ENCODE measurements at regions of chr5 and their contacts with region 1.

Region 1: DNA sequence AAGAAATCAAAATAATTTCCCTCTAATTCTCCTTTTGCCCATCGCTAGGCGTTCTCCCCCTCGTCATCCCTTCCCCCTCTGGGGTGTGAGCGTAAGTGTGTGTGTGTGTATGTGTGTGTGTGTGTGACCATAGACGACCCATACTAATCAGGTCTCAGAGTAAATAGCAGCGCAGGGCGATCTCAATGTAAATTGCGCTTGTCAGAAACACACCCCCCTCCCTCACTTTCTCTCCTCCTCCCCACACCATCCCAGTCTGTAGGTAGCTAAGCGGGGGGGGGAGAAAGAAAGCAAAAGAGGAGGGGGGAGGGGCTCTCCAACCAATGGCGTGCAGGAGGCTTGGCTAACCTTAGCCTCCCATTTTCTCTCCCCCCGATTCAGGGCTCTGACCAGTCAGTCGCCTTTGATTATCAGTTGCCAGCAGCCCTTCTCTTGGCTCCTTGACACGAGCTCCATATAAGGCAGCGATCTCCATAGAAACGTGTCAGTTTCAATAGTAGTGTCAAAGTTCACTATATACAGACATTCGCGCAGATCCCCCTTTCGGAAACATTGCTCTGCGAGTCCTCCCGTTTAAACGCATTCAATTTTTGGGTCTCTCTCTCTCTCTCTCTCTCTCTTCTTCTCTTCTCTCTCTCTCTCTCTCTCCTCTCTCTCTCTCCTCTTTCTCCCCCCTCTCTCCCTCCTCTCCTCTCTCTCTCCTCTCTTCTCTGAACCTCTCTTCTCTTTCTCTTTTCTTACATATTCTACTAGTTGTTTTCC is at the start of gene NR2F1:
- DNase-seq: peak; percentile 99
- ATAC-seq: peak; percentile 77
- H3K4me3 ChIP-seq: peak within 1 kb of the TSS; percentile 90 to 96 (median 95)
- H3K27ac ChIP-seq: peak within 1 kb of the TSS; percentile 92
- H3K4me1 ChIP-seq: peaks cover 26% of the 10 kb centered on the region
- H3K27me3 ChIP-seq: peaks cover 3 to 22% of the 10 kb centered on the region in 2 experiments; a peak in 3 of 5 replicates
- CTCF ChIP-seq: no peak
- EP300 ChIP-seq: peak; percentile 36 to 47; a peak in 1 of 4 replicates
- POLR2A ChIP-seq: peak in 1 of 2 experiments; percentile 96; a peak in 2 of 4 replicates
- RAD21 ChIP-seq: no peak
- total RNA-seq, gene NR2F1: 14.0 and 17.1 TPM in 2 replicates

Region 2: GRCh38 chr5:92885950-92886349 is 696.9 kb before region 1 on chr5:
- CTCF ChIA-PET with region 1: no interaction called
- POLR2A ChIA-PET with region 1: interaction called, 7 read pairs
- in situ Hi-C with region 1: loop called (anchors 5 kb)
- intact Hi-C with region 1: loop called (anchors 2 kb)
- DNase-seq: peak; percentile 53
- ATAC-seq: peak; percentile 90
- H3K4me3 ChIP-seq: no peak overlapping the region
- H3K27ac ChIP-seq: no peak overlapping the region
- H3K4me1 ChIP-seq: peaks cover 48% of the 10 kb centered on the region
- H3K27me3 ChIP-seq: no peaks in the 10 kb centered on the region
- CTCF ChIP-seq: peak; percentile 88
- EP300 ChIP-seq: no peak
- POLR2A ChIP-seq: no peak
- RAD21 ChIP-seq: peak; percentile 85

Region 3: DNA sequence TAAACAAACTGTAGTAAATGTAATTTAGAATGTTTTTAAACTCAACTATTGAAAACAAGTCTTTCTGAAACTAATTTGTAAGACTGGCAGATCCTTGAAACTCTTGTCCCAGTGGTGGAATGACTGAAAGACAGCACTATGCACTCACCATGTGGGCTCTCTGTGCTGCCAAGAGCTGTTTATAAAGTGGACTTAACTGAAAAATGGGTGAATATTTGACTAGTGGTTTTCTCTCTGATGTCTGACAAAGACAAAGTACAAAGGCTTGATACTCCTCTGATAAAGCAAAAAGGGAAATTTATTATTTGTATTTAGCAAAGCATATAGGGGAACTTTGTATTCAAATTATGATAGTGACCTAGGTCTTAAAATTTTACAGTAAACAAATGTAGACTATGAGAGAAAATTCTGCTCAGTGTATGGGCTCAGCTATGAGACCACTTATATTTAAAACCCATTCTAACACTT is 637.2 kb before region 1 on chr5:
- CTCF ChIA-PET with region 1: no interaction called
- POLR2A ChIA-PET with region 1: interaction called, 13 read pairs
- in situ Hi-C with region 1: no loop called
- intact Hi-C with region 1: no loop called
- DNase-seq: peak; percentile 95
- ATAC-seq: peak; percentile 97
- H3K4me3 ChIP-seq: 0 out of 6 replicates have a peak overlapping the region, but pooled peaks of 1 of the 3 experiments have one; percentile 1
- H3K27ac ChIP-seq: peak overlapping the region; percentile 91
- H3K4me1 ChIP-seq: peaks cover 70% of the 10 kb centered on the region
- H3K27me3 ChIP-seq: no peaks in the 10 kb centered on the region
- CTCF ChIP-seq: no peak
- EP300 ChIP-seq: peak in 1 of 2 experiments; percentile 92; a peak in 2 of 4 replicates
- POLR2A ChIP-seq: peak in 1 of 2 experiments; percentile 61; a peak in 3 of 4 replicates
- RAD21 ChIP-seq: no peak

Region 4: DNA sequence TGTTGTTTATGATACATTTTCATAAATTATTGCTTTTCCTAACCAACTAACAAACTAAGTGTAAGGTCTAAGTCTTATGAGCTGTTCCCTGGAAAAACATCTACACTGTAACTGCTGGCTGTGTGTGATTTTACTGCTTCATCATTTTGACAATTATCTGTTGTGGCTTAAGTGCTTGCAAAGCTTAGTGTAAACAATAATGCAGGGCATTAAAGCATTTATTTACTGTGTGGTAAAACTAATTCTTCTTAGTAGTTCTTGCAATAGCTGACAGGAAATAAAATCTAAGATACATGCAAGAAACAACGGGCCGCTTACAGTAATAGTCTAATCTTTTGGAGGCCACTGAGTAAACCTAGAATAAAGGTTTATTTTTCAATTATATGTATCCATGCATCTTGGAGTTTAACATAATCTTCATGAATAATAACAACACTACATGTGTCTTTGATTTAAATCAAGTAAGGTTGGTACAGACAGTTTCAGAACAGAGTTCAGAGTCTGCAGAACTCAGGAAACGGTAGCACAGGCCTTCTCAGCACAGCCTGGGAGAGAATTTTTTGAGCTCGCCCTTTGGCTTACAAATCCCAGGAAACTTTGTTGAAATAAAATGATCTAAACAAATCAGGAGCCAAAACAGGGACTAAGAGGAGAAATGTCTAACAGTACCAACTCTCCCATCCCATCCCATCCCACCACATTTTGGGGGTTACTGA is 474.9 kb before region 1 on chr5:
- CTCF ChIA-PET with region 1: no interaction called
- POLR2A ChIA-PET with region 1: no interaction called
- in situ Hi-C with region 1: no loop called
- intact Hi-C with region 1: no loop called
- DNase-seq: no peak
- ATAC-seq: peak; percentile 46; the same call in 1 of the 3 replicates
- H3K4me3 ChIP-seq: no peak overlapping the region
- H3K27ac ChIP-seq: no peak overlapping the region
- H3K4me1 ChIP-seq: peaks cover 12% of the 10 kb centered on the region; the same call in 1 of the 2 replicates
- H3K27me3 ChIP-seq: no peaks in the 10 kb centered on the region; a peak in 1 of 5 replicates
- CTCF ChIP-seq: no peak
- EP300 ChIP-seq: no peak
- POLR2A ChIP-seq: no peak
- RAD21 ChIP-seq: no peak

Region 5: GRCh38 chr5:93566091-93566490 is 16.8 kb before region 1 on chr5:
- CTCF ChIA-PET with region 1: no interaction called
- POLR2A ChIA-PET with region 1: no interaction called
- in situ Hi-C with region 1: no loop called
- intact Hi-C with region 1: no loop called
- DNase-seq: no peak
- ATAC-seq: no peak
- H3K4me3 ChIP-seq: no peak overlapping the region
- H3K27ac ChIP-seq: no peak overlapping the region
- H3K4me1 ChIP-seq: no peaks in the 10 kb centered on the region
- H3K27me3 ChIP-seq: no peaks in the 10 kb centered on the region
- CTCF ChIP-seq: no peak
- EP300 ChIP-seq: no peak
- POLR2A ChIP-seq: no peak
- RAD21 ChIP-seq: no peak

Region 6: DNA sequence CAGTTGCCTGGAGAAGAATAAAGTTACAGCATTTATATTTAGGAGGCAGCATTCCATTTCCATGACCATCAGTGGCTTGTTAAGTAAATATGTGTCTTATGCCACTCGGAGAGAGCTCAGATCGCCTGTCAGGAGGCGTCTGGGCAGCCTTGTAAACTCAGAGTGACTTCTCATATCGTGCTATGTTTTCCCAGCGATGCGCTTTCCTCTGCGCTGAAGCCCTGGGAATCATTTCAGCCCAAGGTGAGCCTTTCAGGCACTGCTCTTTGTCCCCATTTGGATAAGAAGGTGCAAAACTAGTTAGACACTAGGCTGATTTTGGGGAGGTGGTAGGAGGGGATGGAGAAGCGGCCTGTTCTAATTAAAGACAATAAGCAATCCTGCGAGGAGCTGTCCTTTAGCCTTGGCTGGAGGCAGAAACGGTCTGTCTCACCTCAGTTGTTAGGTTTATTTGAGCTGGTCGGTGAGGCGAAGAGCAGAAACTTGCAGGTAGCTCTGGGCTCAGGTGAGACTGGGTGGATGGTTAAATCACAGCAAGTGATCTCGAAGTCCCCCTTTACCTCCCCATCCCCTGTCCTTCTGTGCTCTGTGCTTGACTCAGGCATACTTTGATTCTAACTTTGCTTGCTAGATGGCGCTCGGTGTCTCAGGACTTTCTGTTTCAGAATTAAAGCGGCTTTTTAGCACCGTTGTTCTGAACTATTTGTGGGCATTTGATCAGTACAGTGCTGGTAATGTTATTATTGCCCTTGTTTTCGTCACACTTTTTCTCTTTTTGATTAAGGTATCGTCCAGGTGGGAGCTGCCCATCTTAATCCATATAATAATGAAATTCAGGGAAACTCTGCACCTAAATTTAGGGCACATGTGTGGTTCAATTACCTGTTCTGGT is 24.8 kb after region 1 on chr5:
- CTCF ChIA-PET with region 1: interaction called, 3 read pairs
- POLR2A ChIA-PET with region 1: interaction called, 4 read pairs
- in situ Hi-C with region 1: no loop called
- intact Hi-C with region 1: loop called (anchors 1 kb)
- DNase-seq: peak; percentile 44
- ATAC-seq: peak; percentile 81
- H3K4me3 ChIP-seq: no peak overlapping the region
- H3K27ac ChIP-seq: no peak overlapping the region
- H3K4me1 ChIP-seq: peaks cover 21% of the 10 kb centered on the region
- H3K27me3 ChIP-seq: peaks cover 3 to 73% of the 10 kb centered on the region in 2 experiments; a peak in 4 of 5 replicates
- CTCF ChIP-seq: peak; percentile 83
- EP300 ChIP-seq: no peak
- POLR2A ChIP-seq: no peak
- RAD21 ChIP-seq: peak; percentile 28; the same call in 1 of the 2 replicates

Region 7: DNA sequence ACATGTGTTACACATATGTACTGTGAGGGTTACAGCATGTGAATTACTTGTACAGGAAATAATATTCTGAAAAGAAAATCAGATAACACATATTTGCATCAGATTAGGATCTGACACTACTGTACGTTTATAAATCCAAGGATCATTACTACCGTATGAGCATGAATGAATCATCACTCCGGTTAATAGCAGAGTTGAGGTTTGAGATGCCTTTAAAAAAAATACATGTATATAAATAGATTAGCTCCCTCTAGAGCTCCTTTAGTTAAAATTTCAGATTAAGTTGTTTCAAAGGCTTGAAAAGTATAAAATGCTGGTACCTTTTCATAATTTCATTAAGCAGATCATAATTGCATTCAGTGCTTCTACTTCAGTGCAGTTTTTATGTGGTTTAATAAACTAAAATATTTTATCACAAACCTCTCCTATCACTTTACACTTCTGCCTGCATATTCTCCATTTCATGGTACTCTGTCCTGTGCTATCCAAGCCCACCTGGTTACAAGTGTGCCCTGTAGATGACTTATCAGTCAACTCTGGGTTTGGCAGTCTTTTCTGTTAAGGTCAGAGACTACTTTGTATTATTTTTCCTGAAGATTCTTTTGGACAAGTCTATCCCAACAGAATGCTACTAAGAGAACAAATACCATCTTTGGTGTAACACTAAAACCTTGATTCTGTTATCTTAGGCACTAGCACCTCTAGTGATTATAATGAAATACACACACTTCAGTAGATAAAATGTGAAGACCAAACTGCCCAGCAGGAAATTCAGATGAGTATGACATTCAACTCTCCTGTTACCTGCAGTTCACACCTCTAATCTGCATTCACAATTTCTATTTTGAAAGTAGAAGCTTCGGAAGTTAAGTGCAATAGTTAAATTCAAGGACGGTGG is 206.6 kb after region 1 on chr5:
- CTCF ChIA-PET with region 1: no interaction called
- POLR2A ChIA-PET with region 1: no interaction called
- in situ Hi-C with region 1: loop called (anchors 5 kb)
- intact Hi-C with region 1: no loop called
- DNase-seq: no peak
- ATAC-seq: no peak
- H3K4me3 ChIP-seq: no peak overlapping the region
- H3K27ac ChIP-seq: no peak overlapping the region
- H3K4me1 ChIP-seq: peaks cover 19% of the 10 kb centered on the region
- H3K27me3 ChIP-seq: no peaks in the 10 kb centered on the region
- CTCF ChIP-seq: no peak
- EP300 ChIP-seq: no peak
- POLR2A ChIP-seq: no peak
- RAD21 ChIP-seq: no peak

Region 8: GRCh38 chr5:93915142-93915553 is 332.3 kb after region 1 on chr5:
- CTCF ChIA-PET with region 1: interaction called, 8 read pairs
- POLR2A ChIA-PET with region 1: interaction called, 3 read pairs
- in situ Hi-C with region 1: loop called (anchors 10 kb)
- intact Hi-C with region 1: loop called (anchors 2 kb)
- DNase-seq: peak; percentile 50
- ATAC-seq: peak; percentile 65
- H3K4me3 ChIP-seq: no peak overlapping the region
- H3K27ac ChIP-seq: no peak overlapping the region
- H3K4me1 ChIP-seq: peaks cover 9% of the 10 kb centered on the region; the same call in 1 of the 2 replicates
- H3K27me3 ChIP-seq: no peaks in the 10 kb centered on the region; a peak in 1 of 5 replicates
- CTCF ChIP-seq: peak; percentile 74
- EP300 ChIP-seq: no peak
- POLR2A ChIP-seq: no peak
- RAD21 ChIP-seq: peak; percentile 51; the same call in 1 of the 2 replicates